Sciatic nerve (tissue), 2 donors: ENCODE measurements at regions of chr5 and their contacts with region 1.

Region 1: GRCh38 chr5:111548992-111549649 is 36.8 kb upstream of the STARD4 start:
- DNase-seq: no peak
- ATAC-seq: no peak

Region 2: GRCh38 chr5:111635151-111635902 is 86.2 kb after region 1 on chr5:
- intact Hi-C with region 1: no loop called
- DNase-seq: no peak
- ATAC-seq: peak; percentile 38

Region 3: GRCh38 chr5:111800356-111800755 is 251.2 kb after region 1 on chr5:
- intact Hi-C with region 1: no loop called
- DNase-seq: no peak
- ATAC-seq: no peak

Region 4: DNA sequence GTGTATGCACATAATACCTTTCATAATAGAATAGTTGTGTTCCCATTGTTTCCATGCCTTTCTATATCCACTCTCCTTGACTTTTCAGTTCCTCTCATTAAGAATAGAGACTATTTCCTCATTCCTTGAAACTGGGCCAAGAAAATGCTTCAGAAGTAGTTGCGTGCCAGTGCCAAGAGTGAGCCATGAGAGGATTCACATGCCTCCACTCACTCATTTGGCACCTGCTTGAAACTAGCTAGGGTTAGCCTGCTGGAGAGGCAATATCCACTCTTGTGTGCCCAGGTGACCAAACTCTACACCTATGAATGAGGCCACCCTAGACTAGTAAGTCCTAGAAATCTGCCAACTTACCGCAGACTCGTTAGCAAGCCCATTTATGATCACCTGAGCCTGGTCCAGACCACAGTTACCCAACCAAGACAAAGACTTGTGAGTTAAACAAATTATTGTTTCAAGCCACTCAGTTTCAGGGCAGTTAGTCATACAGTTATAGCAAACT is 593.7 kb after region 1 on chr5:
- intact Hi-C with region 1: loop called (anchors 5 kb)
- DNase-seq: no peak
- ATAC-seq: no peak